Activated naive CD4-positive, alpha-beta T cell treated with anti-CD3 and anti-CD28 coated beads for 36 hours (primary cell): ENCODE measurements at regions of chr10 and their contacts with region 1.

Region 1: DNA sequence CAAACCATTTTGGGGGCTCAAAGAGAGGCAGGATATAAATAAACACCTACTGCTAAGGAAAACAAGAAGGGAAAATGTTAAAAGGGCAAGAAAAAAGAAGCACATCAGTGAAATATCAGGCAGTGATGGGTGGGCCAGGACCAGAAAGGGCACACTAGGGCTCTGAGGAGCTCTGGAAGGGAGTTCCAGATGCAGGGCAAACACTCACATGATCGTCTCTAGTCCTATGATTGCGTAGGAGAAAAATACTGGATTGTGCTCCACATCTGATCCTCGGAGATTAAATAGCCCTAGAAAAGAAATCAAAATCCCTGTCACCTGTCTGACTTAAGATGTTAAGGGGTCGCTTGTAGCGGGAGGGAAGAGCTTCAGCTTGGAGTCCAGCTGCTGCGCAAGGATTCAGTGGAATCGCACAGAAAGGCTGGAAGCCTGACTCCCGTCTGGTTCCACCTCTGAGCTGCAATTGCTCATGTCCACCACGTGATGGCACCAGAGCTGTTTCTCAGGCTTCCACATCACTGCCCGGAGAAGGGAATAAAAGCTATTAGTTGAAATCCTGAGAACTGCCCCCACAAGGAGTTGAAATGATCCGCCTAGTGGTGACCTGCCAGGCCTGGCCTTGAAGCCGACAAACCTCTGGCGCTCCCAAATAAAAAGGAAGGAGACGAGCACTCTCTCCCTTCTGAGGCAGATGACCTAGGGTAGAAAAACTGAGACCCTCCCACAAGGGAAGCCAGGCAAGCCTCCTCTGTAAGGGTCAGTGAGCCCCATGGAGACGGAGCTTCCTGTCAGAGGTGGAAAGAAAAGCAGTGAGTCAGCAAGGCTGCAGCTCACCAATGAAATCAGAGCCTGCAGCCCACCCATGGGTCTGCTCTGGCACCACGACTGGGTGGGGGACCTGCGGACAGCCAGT is 39.2 kb downstream of the XPNPEP1 start:
- DNase-seq: peak; percentile 74
- H3K4me3 Mint-ChIP-seq: no peak overlapping the region
- H3K27ac Mint-ChIP-seq: no peak overlapping the region
- H3K4me1 Mint-ChIP-seq: peaks cover 9% of the 10 kb centered on the region
- H3K27me3 Mint-ChIP-seq: no peaks in the 10 kb centered on the region

Region 2: GRCh38 chr10:109902934-109903589 is 18.9 kb after region 1 on chr10:
- CTCF ChIA-PET with region 1: interaction called, 20 read pairs
- intact Hi-C with region 1: no loop called
- DNase-seq: peak; percentile 41
- H3K4me3 Mint-ChIP-seq: peak overlapping the region; percentile 0
- H3K27ac Mint-ChIP-seq: peak overlapping the region; percentile 77
- H3K4me1 Mint-ChIP-seq: peaks cover 45% of the 10 kb centered on the region
- H3K27me3 Mint-ChIP-seq: no peaks in the 10 kb centered on the region

Region 3: DNA sequence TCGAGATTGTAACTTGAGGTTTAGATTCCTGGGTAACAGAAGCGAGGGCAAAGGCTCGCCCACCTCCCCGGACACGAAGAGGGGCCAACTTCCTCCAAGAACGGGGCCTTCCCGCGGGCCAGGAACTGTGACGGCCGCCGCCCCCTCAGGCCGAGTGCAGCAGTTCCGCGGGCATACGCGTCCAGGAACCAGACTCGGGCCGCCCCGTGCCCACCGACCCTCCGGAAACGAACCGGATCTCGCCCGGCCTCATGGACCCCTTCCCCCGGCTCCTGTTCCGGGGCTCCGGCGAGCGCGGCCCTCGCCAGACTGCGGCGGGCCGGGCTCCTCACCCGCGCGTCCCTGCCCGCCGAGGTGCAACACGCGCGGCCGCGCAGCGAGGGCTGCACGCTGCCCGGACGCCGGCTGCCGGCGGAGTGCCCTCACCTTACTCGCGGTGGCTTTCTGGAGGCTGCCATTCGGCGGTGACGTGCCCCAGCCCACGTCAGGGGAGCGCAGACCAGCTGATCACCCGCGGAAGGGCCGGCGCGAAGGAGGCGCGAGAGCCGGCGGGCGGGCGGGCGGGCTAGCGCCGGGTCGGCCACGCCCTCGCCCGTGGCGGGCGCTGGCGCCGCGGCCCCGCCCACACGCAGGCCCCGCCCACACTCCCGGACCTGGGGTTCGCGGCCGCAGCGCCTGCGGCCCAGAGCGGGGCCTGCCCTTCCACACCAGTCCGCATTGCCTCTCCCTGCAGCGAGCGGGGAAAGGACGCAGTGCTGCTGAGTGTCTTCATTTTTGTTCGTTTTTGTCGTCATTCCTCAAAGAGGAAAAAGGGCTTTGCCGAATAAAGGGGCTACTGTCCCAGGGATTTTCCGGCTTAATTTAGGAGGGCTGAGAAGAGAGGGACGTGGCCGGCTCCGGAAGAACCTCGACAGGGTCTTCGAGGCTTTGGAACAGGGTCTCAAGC is 39.1 kb after region 1 on chr10 and contains the start of gene XPNPEP1:
- CTCF ChIA-PET with region 1: interaction called, 9 read pairs
- intact Hi-C with region 1: loop called (anchors 1 kb)
- DNase-seq: peak; percentile 86
- H3K4me3 Mint-ChIP-seq: peak within 1 kb of the TSS; percentile 84
- H3K27ac Mint-ChIP-seq: peak within 1 kb of the TSS; percentile 81
- H3K4me1 Mint-ChIP-seq: peaks cover 53% of the 10 kb centered on the region
- H3K27me3 Mint-ChIP-seq: no peaks in the 10 kb centered on the region
- total RNA-seq, gene XPNPEP1: 52.2 to 52.6 TPM

Region 4: DNA sequence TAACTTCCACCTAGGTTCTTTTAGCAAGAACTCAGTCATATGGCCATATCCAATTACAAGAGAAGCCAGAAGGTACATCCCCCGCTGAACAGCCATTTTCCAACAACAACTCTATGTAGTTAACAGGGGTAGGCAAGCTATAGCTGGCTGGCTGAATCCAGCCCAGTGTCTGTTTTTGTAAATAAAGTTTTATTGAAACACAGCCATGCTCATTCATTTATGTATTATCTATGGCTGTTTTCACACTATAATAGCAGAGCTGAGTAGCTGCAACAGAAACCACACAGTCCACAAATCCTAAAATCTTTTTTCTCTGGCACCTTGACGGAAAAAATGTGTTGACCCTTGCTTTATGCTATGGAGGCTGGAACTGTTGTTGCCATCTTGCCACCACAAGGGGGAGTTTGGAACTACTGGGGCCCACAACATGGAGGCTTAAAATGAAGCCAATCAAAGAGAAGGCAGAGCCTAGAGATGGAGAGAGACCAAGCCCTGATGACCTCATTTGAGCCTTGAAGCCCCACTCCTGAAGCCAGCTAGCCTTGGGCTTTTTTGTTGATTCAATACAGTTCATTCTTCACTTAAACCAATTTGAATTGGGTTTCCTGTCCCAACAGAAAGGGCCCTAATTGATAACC is 72.5 kb after region 1 on chr10:
- CTCF ChIA-PET with region 1: interaction called, 7 read pairs
- intact Hi-C with region 1: loop called (anchors 2 kb)
- DNase-seq: peak; percentile 45
- H3K4me3 Mint-ChIP-seq: no peak overlapping the region
- H3K27ac Mint-ChIP-seq: no peak overlapping the region
- H3K4me1 Mint-ChIP-seq: peaks cover 2% of the 10 kb centered on the region
- H3K27me3 Mint-ChIP-seq: no peaks in the 10 kb centered on the region

Region 5: GRCh38 chr10:110016039-110016438 is 131.9 kb after region 1 on chr10:
- CTCF ChIA-PET with region 1: interaction called, 5 read pairs
- intact Hi-C with region 1: loop called (anchors 1 kb)
- DNase-seq: no peak
- H3K4me3 Mint-ChIP-seq: no peak overlapping the region
- H3K27ac Mint-ChIP-seq: peak overlapping the region; percentile 75
- H3K4me1 Mint-ChIP-seq: peaks cover 77% of the 10 kb centered on the region
- H3K27me3 Mint-ChIP-seq: no peaks in the 10 kb centered on the region

Region 6: GRCh38 chr10:110137142-110137545 is 253.0 kb after region 1 on chr10:
- CTCF ChIA-PET with region 1: interaction called, 9 read pairs
- intact Hi-C with region 1: loop called (anchors 1 kb)
- DNase-seq: no peak
- H3K4me3 Mint-ChIP-seq: no peak overlapping the region
- H3K27ac Mint-ChIP-seq: peak overlapping the region; percentile 17
- H3K4me1 Mint-ChIP-seq: peaks cover 39% of the 10 kb centered on the region
- H3K27me3 Mint-ChIP-seq: no peaks in the 10 kb centered on the region

Region 7: DNA sequence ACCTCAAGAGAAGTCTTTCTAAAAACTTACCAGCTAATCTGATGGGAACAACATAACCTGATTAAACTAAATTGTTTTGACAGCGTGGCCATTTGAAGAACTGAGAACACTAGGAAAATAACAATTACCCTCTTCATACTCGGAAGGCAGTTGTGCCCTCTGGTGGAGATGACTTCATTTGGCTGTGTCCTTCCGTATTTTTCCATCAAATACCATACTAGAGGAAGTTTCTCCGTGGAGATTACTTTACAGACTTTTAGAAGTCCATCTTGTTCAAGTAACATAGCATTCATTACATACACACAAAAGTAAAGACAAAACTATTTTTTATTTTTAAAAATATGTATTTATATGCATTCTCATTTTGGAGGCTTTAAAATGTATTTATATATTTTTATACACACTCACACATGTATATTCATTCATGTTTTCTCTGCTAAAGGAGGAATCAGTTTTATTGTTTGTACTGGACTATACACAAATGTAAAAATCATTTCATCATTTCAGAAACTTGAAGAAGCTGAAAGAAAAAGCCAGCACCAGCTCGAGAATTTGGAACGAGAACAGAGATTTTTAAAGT is 395.4 kb after region 1 on chr10:
- CTCF ChIA-PET with region 1: interaction called, 5 read pairs
- intact Hi-C with region 1: loop called (anchors 2 kb)
- DNase-seq: peak; percentile 69
- H3K4me3 Mint-ChIP-seq: no peak overlapping the region
- H3K27ac Mint-ChIP-seq: no peak overlapping the region
- H3K4me1 Mint-ChIP-seq: peaks cover 18% of the 10 kb centered on the region
- H3K27me3 Mint-ChIP-seq: no peaks in the 10 kb centered on the region